CD14-positive monocyte (primary cell): ENCODE measurements at regions of chr9 and their contacts with region 1.

Region 1: GRCh38 chr9:109119439-109120203 is at the start of gene TMEM245:
- DNase-seq: peak; percentile 95 to 96 (median 96)
- H3K4me3 ChIP-seq: peak within 1 kb of the TSS; percentile 59 to 86 (median 84)
- H3K4me3 Mint-ChIP-seq: peak within 1 kb of the TSS; percentile 87 to 89
- H3K27ac ChIP-seq: peak within 1 kb of the TSS; percentile 49 to 77
- H3K27ac Mint-ChIP-seq: peak within 1 kb of the TSS; percentile 50 to 89 (median 77)
- H3K4me1 ChIP-seq: peaks cover 37 to 46% of the 10 kb centered on the region in 2 donors
- H3K4me1 Mint-ChIP-seq: peaks cover 56% of the 10 kb centered on the region
- H3K27me3 ChIP-seq: no peaks in the 10 kb centered on the region
- H3K27me3 Mint-ChIP-seq: no peaks in the 10 kb centered on the region
- CTCF ChIP-seq: no peak
- polyA plus RNA-seq, gene TMEM245: 6.9 to 11.3 (median 9.7) TPM

Region 2: DNA sequence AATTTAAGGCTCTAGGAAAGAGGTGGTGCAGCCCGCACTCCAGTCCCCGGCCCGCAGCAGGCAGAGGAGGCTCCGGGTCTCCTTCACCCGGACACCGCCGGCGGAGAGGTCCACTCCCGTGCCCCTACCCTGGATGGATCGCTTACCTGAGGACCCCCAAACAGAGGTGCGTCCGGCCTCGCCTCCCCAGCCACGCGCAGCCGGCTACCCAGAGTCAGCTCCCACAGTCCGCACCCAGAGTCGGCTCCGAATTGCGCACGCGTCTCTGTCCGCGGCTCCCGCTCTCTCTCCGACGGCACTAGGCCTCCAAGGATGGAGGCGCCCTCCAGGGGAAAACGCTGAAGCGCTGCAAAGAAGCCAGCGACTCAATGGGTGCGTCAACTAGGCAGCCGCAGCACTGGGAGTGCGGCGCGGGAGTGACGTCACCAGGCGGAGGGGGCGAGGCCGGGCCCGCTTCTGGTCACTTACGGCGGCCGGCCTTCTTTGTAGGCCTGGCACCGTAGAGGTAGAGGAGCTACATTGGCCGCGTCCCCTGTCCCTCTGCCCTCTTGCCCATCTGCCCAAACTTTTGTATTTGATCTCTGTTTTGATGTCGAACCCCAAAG is 185.8 kb before region 1 on chr9 and contains the start of gene ELP1:
- intact Hi-C with region 1: loop called in 1 of 2 experiments (anchors 10 kb)
- DNase-seq: peak; percentile 92 to 93 (median 93)
- H3K4me3 ChIP-seq: peak within 1 kb of the TSS; percentile 69 to 96 (median 88)
- H3K4me3 Mint-ChIP-seq: peak within 1 kb of the TSS; percentile 97 to 98
- H3K27ac ChIP-seq: peak within 1 kb of the TSS; percentile 86 to 93
- H3K27ac Mint-ChIP-seq: peak within 1 kb of the TSS; percentile 91 to 97 (median 96)
- H3K4me1 ChIP-seq: peaks cover 19 to 25% of the 10 kb centered on the region in 2 donors
- H3K4me1 Mint-ChIP-seq: peaks cover 19% of the 10 kb centered on the region
- H3K27me3 ChIP-seq: no peaks in the 10 kb centered on the region
- H3K27me3 Mint-ChIP-seq: peaks cover 0 to 1% (median 0%) of the 10 kb centered on the region in 3 donors
- CTCF ChIP-seq: peak; percentile 32
- polyA plus RNA-seq, gene ELP1: 7.9 to 12.2 (median 11.1) TPM

Region 3: DNA sequence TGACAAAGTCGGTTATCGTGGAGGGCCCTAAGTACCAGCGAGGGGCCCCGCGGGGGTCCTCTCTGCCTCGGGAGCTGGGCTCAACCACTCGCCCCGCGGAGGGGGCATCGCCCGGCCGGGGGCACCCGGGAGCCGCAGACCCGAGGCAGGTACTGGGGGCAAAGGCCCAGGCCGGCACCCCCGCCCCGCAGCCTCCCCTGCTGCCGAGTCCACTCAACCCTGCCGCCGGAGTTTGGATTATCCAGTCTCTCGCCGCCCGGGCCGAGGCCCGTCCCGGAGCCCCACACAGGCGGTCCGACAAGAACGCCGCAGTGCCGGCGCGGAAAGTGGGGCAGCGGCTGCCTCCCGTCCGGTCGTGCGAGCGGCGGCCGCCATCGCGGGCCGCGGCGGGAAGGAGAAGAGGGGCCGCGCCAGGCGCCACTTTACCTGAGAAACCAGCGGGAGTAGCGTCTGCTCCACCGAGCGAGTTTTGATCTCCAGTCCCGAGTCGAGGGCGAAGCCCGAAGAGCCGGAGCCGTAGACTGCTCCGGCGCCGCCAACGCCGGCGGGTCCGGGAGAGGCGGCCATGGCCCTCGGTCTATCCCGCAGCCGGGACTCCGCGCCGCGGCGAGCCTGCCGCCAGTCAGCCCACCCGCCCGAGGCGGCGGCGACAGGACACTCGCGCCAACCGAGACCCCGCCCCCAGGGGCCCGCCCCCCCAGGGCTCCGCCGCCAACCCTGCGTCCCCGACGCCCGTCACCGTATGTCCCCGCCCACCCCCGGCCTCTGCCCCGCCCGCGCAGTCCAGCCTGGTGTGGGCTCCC is 106.5 kb before region 1 on chr9 and contains the start of gene CTNNAL1:
- intact Hi-C with region 1: loop called in 1 of 2 experiments (anchors 10 kb)
- DNase-seq: peak; percentile 65 to 75 (median 70)
- H3K4me3 ChIP-seq: peak within 1 kb of the TSS; percentile 56 to 87 (median 84)
- H3K4me3 Mint-ChIP-seq: peak within 1 kb of the TSS; percentile 99
- H3K27ac ChIP-seq: peak within 1 kb of the TSS in 1 of 2 donors; percentile 55
- H3K27ac Mint-ChIP-seq: peak within 1 kb of the TSS; percentile 73 to 89 (median 82)
- H3K4me1 ChIP-seq: peaks cover 25 to 33% of the 10 kb centered on the region in 2 donors
- H3K4me1 Mint-ChIP-seq: peaks cover 35% of the 10 kb centered on the region
- H3K27me3 ChIP-seq: no peaks in the 10 kb centered on the region
- H3K27me3 Mint-ChIP-seq: peaks cover 6 to 9% (median 8%) of the 10 kb centered on the region in 3 donors
- CTCF ChIP-seq: no peak
- polyA plus RNA-seq, gene CTNNAL1: 0.10 to 0.39 (median 0.25) TPM

Region 4: DNA sequence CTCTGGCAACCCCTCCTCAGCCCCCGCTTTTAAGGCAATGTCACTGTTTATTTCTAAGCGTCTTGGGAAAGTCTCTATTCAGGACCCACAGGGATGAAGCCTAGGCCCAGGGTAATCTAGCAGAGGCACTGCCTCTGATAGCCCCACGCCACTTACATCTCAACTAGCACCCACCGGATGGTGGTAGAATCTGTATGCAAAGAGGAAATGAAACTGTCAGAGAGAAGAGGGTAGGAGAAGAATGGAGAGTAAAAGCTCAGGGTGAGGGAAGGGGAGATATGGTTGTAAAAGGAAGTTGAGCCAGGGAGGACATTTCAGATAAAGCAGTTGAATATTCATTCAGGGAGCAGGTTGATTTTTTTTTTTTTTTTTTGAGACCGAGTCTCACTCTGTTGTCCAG is 44.4 kb after region 1 on chr9:
- intact Hi-C with region 1: no loop called
- DNase-seq: no peak
- H3K4me3 ChIP-seq: no peak overlapping the region
- H3K4me3 Mint-ChIP-seq: peak overlapping the region in 1 of 2 donors; percentile 40
- H3K27ac ChIP-seq: no peak overlapping the region
- H3K27ac Mint-ChIP-seq: peak overlapping the region in 1 of 7 donors; percentile 31
- H3K4me1 ChIP-seq: no peaks in the 10 kb centered on the region
- H3K4me1 Mint-ChIP-seq: peaks cover 5% of the 10 kb centered on the region
- H3K27me3 ChIP-seq: peaks cover 34 to 44% of the 10 kb centered on the region in 2 donors
- H3K27me3 Mint-ChIP-seq: peaks cover 49 to 74% (median 53%) of the 10 kb centered on the region in 3 donors
- CTCF ChIP-seq: no peak

Region 5: DNA sequence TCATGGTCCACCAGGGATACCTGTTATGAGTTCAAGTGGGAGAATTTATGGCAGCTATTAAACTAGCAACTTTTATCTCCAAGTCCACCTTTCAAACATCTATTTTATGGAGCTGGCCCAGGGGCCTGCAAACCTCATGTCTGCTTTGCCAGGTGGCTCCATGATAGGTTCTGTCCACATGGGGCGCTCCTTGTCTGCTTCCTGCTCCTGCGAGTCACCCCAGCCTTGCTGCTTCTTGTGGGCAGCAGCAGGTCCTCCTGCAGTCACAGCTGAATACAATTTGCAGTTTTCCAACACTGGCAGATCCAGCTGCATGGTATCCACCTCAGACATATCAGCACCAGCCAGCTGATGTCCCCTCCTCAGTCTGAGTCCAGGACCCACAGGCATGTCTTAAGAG is 87.0 kb after region 1 on chr9:
- intact Hi-C with region 1: no loop called
- DNase-seq: no peak
- H3K4me3 ChIP-seq: no peak overlapping the region
- H3K4me3 Mint-ChIP-seq: no peak overlapping the region
- H3K27ac ChIP-seq: no peak overlapping the region
- H3K27ac Mint-ChIP-seq: no peak overlapping the region
- H3K4me1 ChIP-seq: no peaks in the 10 kb centered on the region
- H3K4me1 Mint-ChIP-seq: no peaks in the 10 kb centered on the region
- H3K27me3 ChIP-seq: peaks cover 0 to 5% of the 10 kb centered on the region in 2 donors
- H3K27me3 Mint-ChIP-seq: peaks cover 5 to 19% (median 17%) of the 10 kb centered on the region in 3 donors
- CTCF ChIP-seq: no peak